Activated CD4-positive, alpha-beta T cell treated with anti-CD3 and anti-CD28 coated beads, Interleukin-2, amount 10 ng/mL, durations not matched to agents 7 days and 5 days (primary cell): ENCODE measurements at regions of chr2 and their contacts with region 1.

Region 1: GRCh38 chr2:9638532-9638931 is 7.7 kb upstream of the YWHAQ start:
- DNase-seq: no peak
- H3K4me3 Mint-ChIP-seq: no peak overlapping the region
- H3K27ac Mint-ChIP-seq: no peak overlapping the region
- H3K4me1 Mint-ChIP-seq: peaks cover 28% of the 10 kb centered on the region
- H3K27me3 Mint-ChIP-seq: peaks cover 14% of the 10 kb centered on the region

Region 2: GRCh38 chr2:9656270-9656766 is 17.8 kb after region 1 on chr2:
- CTCF ChIA-PET with region 1: interaction called, 15 read pairs
- POLR2A ChIA-PET with region 1: no interaction called
- DNase-seq: peak; percentile 71
- H3K4me3 Mint-ChIP-seq: no peak overlapping the region
- H3K27ac Mint-ChIP-seq: peak overlapping the region; percentile 85
- H3K4me1 Mint-ChIP-seq: peaks cover 39% of the 10 kb centered on the region
- H3K27me3 Mint-ChIP-seq: peaks cover 10% of the 10 kb centered on the region

Region 3: DNA sequence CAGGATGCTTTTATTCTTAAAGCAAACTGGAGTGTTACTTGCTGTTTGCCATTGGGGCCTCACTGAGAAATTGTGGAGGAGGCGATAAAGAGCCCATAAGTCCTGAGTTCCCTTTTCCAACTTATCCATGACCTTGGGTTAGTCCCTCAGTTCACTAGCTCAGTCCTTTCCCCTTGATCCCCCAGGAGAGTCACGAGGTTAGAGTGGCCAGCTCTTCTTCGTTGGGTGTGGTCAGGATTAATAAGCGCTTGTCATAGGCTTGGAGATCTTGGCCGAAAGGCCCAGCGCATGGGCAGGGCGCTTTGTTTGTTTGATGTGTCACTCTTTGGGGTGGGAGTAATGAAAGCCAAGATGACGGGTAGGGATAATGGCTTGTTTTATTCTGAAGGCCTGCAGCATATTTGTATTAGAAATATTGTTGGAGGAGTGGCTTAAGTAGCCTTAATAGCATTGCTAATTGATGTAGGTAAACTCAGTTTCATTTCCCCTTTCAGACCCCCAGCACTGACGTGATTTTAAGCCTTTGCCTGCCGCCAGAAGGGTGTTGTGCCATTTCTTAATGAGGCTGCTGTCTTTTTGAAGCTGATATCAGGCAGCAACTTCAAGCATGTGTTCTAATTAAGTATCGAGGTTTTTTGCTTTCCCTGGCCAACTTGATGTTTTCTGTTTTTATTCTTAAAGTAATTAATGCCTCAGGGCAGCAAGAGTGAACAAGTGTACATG is 328.7 kb after region 1 on chr2:
- CTCF ChIA-PET with region 1: no interaction called
- POLR2A ChIA-PET with region 1: no interaction called
- DNase-seq: no peak
- H3K4me3 Mint-ChIP-seq: no peak overlapping the region
- H3K27ac Mint-ChIP-seq: no peak overlapping the region
- H3K4me1 Mint-ChIP-seq: peaks cover 20% of the 10 kb centered on the region
- H3K27me3 Mint-ChIP-seq: no peaks in the 10 kb centered on the region